ENCODE measurements at regions of chr11 and their contacts with region 1.

Region 1: GRCh38 chr11:8911029-8911826 is at the start of gene AKIP1:
- DNase-seq: peak; percentile 99
- H3K4me3 ChIP-seq: peak within 1 kb of the TSS; percentile 97
- H3K27ac ChIP-seq: peak within 1 kb of the TSS; percentile 95
- H3K4me1 ChIP-seq: peaks cover 15% of the 10 kb centered on the region
- H3K27me3 ChIP-seq: no peaks in the 10 kb centered on the region
- CTCF ChIP-seq: no peak
- total RNA-seq, gene AKIP1: 26.7 and 28.9 TPM in 2 replicates

Region 2: GRCh38 chr11:8688414-8689362 is 222.5 kb before region 1 on chr11:
- CTCF ChIA-PET with region 1: no interaction called
- POLR2A ChIA-PET with region 1: no interaction called
- intact Hi-C with region 1: loop called (anchors 5 kb)
- DNase-seq: peak; percentile 96
- H3K4me3 ChIP-seq: peak overlapping the region; percentile 57
- H3K27ac ChIP-seq: peak overlapping the region; percentile 55
- H3K4me1 ChIP-seq: peaks cover 29% of the 10 kb centered on the region
- H3K27me3 ChIP-seq: no peaks in the 10 kb centered on the region
- CTCF ChIP-seq: no peak

Region 3: DNA sequence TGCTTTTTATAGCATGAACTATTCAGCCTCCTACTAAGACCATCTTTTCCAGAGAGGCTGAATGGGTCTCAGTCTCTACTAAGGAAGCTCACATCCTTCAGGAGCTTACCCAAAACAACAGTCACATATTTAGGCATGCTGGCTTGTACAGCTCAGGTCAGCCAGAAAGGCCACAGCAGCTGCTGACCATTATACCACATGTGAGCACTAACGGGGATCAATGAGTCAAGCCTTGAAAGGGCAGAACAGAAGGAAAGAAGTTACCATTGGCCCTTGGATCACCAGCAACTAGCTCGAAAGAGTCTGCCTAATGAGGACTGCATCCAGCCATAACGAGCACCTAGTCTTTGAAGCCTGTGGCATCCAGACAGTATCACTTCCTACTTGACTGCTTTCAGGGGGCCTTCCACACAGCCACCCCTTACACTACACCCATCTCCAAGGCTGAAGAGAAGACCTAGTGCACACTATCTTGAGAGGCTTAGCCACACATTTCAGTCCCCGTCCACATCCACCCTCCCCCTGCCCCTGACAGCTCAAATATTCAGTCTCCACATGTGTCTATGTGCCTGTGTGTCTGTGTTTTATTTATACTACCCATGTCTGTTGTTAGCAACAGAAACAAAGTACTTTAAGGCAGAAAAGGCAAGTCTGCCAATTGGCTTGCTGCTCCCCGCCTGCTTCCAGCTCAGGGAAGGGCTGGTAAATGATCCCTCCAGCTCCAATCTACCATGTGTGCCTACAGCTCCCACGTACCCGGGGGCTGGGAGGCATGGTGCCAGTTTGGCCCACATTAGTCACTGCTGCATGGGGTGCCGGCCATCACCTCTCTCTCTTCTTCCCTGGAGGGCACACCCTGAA is 133.1 kb before region 1 on chr11:
- CTCF ChIA-PET with region 1: no interaction called
- POLR2A ChIA-PET with region 1: no interaction called
- intact Hi-C with region 1: no loop called
- DNase-seq: no peak
- H3K4me3 ChIP-seq: no peak overlapping the region
- H3K27ac ChIP-seq: no peak overlapping the region
- H3K4me1 ChIP-seq: no peaks in the 10 kb centered on the region
- H3K27me3 ChIP-seq: no peaks in the 10 kb centered on the region
- CTCF ChIP-seq: no peak

Region 4: GRCh38 chr11:8964324-8965320 is 53.4 kb after region 1 on chr11 and contains the start of gene TMEM9B:
- CTCF ChIA-PET with region 1: interaction called, 8 read pairs
- POLR2A ChIA-PET with region 1: no interaction called
- intact Hi-C with region 1: loop called (anchors 1 kb)
- DNase-seq: peak; percentile 76
- H3K4me3 ChIP-seq: peak within 1 kb of the TSS; percentile 92
- H3K27ac ChIP-seq: peak within 1 kb of the TSS; percentile 73
- H3K4me1 ChIP-seq: no peaks in the 10 kb centered on the region
- H3K27me3 ChIP-seq: no peaks in the 10 kb centered on the region
- CTCF ChIP-seq: no peak
- total RNA-seq, gene TMEM9B: 9.1 and 11.3 TPM in 2 replicates

Region 5: DNA sequence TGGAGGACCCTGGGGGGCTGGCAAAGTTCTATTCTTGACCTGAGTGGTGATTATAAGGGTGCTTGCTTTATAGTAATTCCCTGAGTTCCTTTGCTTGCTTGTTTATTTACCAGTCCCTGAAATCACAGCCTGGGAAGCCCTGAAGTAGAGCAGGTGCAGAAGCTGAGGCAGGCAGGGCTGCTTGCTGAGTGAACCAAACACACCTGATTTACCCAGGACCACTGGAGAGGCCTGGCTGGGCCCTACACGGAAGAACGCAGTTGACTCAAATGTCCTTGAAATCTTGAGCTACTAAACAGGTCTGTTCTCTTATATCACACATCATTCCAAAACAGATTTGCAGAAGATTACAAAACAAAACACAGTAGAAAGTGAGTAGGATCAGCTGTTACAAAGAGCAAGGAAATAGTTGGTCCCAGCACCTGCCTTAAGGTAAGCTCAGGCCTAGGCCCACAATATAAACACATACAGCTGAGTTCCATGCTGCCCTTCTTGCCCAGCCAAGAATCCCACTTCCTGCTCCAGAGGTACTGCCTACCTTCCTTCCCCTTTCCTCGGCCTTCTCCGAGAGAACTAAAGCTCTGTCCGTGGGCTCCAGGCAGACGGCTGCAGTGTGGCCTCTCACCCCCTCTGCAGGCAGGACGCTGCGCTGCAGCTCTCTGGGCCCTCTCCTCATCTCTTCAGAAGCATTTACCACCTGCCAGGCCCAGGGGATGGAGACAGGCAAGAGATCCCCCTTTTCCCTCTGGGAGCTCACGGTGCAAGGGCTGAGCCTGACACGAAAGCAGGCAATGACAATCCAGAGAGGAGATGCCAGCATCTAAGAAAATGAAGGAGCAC is 226.3 kb after region 1 on chr11:
- CTCF ChIA-PET with region 1: no interaction called
- POLR2A ChIA-PET with region 1: no interaction called
- intact Hi-C with region 1: loop called (anchors 2 kb)
- DNase-seq: peak; percentile 79
- H3K4me3 ChIP-seq: no peak overlapping the region
- H3K27ac ChIP-seq: no peak overlapping the region
- H3K4me1 ChIP-seq: peaks cover 24% of the 10 kb centered on the region
- H3K27me3 ChIP-seq: no peaks in the 10 kb centered on the region
- CTCF ChIP-seq: peak; percentile 90

Region 6: DNA sequence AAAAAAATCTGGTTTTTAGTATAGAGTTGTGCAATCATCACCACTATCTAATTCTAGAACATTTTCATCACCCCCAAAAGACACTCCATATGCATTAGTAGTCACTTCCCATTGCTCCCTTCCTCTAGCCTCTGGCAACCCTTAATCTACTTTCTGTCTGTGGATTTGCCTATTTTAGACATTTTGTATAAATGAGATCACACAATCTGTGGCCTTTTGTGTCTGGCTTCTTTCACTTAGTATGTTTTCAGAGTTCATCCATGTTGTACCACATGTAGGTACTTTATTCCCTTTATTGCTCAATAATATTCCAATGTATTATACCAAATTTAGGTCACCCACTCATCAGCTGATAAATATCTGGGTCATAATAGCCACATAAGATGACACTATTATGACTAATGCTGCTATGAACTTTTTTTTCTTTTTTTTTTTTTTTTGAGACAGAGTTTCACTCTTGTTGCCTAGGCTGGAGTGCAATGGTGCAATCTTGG is 247.7 kb after region 1 on chr11:
- CTCF ChIA-PET with region 1: no interaction called
- POLR2A ChIA-PET with region 1: no interaction called
- intact Hi-C with region 1: no loop called
- DNase-seq: no peak
- H3K4me3 ChIP-seq: no peak overlapping the region
- H3K27ac ChIP-seq: no peak overlapping the region
- H3K4me1 ChIP-seq: peaks cover 9% of the 10 kb centered on the region
- H3K27me3 ChIP-seq: no peaks in the 10 kb centered on the region
- CTCF ChIP-seq: no peak